Mammary epithelial cell (primary cell): ENCODE measurements at regions of chr6 and their contacts with region 1.

Region 1: DNA sequence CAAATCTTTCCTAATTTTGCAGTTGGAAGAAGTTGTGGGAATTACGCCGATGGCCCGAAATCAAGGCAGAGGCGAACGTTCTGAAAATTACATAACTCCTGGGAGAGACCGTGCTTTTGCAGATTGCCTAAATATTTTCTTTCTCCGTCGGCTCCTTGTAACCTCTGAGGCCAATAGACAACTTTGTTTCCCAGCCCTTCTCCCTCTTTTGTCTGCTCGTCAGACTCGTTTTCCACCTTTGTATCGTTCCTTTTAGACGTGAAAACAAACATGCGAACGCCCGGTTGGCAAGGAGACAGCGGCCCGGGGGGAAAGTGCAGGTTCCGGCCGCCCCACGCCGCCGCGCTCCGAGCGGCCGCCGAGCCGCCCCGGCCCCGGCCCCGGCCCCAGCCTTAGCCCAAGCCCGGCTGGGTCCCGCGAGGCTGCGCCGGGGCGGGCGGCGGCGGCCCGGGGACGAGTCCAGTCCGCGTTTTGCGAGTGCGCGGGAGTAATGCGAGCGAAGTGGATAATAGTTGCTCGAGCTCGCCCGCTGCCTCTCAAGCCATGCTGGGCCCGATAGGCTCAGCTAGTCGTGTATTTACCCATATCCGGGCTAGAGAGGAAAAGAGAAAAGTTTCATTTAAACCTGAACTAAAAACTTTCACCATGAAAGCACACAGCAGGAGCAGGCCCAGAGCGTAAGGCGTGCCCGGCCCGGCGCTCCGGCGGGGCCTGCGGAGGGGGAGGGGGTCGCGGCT is at the start of gene ARID1B:
- DNase-seq: peak; percentile 76
- H3K4me3 ChIP-seq: peak within 1 kb of the TSS; percentile 85 to 92 (median 91)
- H3K27ac ChIP-seq: peak within 1 kb of the TSS; percentile 93
- H3K4me1 ChIP-seq: peaks cover 24% of the 10 kb centered on the region
- H3K27me3 ChIP-seq: no peaks in the 10 kb centered on the region
- CTCF ChIP-seq: no peak
- total RNA-seq, gene ARID1B: 42.5 to 53.7 TPM

Region 2: GRCh38 chr6:155936551-155936950 is 840.5 kb before region 1 on chr6:
- CTCF ChIA-PET with region 1: no interaction called
- dilution Hi-C with region 1: no loop called
- in situ Hi-C with region 1: no loop called
- intact Hi-C with region 1: no loop called
- DNase-seq: no peak
- H3K4me3 ChIP-seq: no peak overlapping the region
- H3K27ac ChIP-seq: no peak overlapping the region
- H3K4me1 ChIP-seq: no peaks in the 10 kb centered on the region
- H3K27me3 ChIP-seq: no peaks in the 10 kb centered on the region
- CTCF ChIP-seq: no peak

Region 3: GRCh38 chr6:156378853-156379252 is 398.2 kb before region 1 on chr6:
- CTCF ChIA-PET with region 1: no interaction called
- dilution Hi-C with region 1: no loop called
- in situ Hi-C with region 1: no loop called
- intact Hi-C with region 1: no loop called
- DNase-seq: no peak
- H3K4me3 ChIP-seq: no peak overlapping the region
- H3K27ac ChIP-seq: no peak overlapping the region
- H3K4me1 ChIP-seq: no peaks in the 10 kb centered on the region
- H3K27me3 ChIP-seq: no peaks in the 10 kb centered on the region
- CTCF ChIP-seq: no peak

Region 4: GRCh38 chr6:156538875-156539660 is 237.9 kb before region 1 on chr6:
- CTCF ChIA-PET with region 1: no interaction called
- dilution Hi-C with region 1: no loop called
- in situ Hi-C with region 1: no loop called
- intact Hi-C with region 1: no loop called
- DNase-seq: no peak
- H3K4me3 ChIP-seq: no peak overlapping the region
- H3K27ac ChIP-seq: no peak overlapping the region
- H3K4me1 ChIP-seq: no peaks in the 10 kb centered on the region
- H3K27me3 ChIP-seq: no peaks in the 10 kb centered on the region
- CTCF ChIP-seq: no peak

Region 5: DNA sequence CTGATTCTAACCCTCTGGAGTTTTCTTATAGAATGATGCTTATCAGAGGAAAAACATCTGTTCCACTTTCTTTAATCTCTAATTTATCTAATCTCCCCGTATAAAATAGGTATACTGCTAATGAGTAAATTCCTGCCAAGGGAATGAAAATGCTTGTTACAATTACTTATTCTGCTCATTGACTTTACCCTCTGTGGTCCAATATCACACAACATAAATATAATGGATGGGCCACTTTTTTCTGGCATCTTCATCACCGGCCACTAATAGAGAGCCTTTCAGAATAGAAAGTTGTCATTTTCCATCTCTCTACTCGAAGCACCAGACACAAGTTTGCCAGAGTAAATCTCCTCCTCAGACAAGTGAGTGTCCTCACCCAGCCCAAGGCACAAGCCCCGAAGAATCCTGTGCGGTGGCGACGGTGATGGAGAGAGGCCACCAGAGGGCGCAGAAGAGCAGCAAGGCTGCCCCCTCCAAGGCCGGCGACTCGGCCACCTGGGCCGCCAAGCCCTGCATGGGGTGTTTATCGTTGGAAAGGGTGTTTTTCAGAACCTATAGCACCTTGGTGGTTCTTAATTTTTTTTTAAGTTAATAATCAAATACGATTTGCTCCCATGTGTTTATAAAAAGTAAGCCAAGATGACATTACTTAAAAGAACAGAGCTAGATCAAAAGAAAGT is 212.7 kb before region 1 on chr6:
- CTCF ChIA-PET with region 1: no interaction called
- dilution Hi-C with region 1: no loop called
- in situ Hi-C with region 1: no loop called
- intact Hi-C with region 1: loop called (anchors 2 kb)
- DNase-seq: peak; percentile 36
- H3K4me3 ChIP-seq: no peak overlapping the region
- H3K27ac ChIP-seq: no peak overlapping the region
- H3K4me1 ChIP-seq: no peaks in the 10 kb centered on the region
- H3K27me3 ChIP-seq: no peaks in the 10 kb centered on the region
- CTCF ChIP-seq: peak; percentile 87 to 96

Region 6: DNA sequence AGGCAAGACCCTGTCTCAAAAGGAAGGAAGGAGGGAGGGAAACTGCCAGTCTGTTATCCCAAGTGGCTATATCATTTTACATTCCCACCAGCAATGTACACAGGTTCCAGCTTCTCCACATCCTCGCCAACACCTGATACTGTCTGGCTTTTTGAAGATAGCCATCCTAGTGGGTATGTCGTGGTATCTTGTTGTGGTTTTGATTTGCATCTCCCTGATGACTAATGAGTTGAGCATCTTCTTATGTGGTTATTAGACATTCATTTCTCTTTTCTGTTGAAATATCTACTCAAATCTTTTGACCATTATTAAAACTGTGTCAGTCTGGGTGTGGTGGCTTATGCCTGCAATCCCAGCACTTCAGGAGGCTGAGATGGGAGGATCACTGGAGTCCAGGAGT is 47.8 kb before region 1 on chr6:
- CTCF ChIA-PET with region 1: interaction called, 4 read pairs
- dilution Hi-C with region 1: loop called (anchors 5 kb)
- in situ Hi-C with region 1: no loop called
- intact Hi-C with region 1: no loop called
- DNase-seq: peak; percentile 85
- H3K4me3 ChIP-seq: no peak overlapping the region
- H3K27ac ChIP-seq: no peak overlapping the region
- H3K4me1 ChIP-seq: no peaks in the 10 kb centered on the region
- H3K27me3 ChIP-seq: peaks cover 1% of the 10 kb centered on the region
- CTCF ChIP-seq: no peak

Region 7: GRCh38 chr6:156933201-156934068 is 156.4 kb after region 1 on chr6:
- CTCF ChIA-PET with region 1: no interaction called
- dilution Hi-C with region 1: no loop called
- in situ Hi-C with region 1: no loop called
- intact Hi-C with region 1: no loop called
- DNase-seq: no peak
- H3K4me3 ChIP-seq: no peak overlapping the region
- H3K27ac ChIP-seq: no peak overlapping the region
- H3K4me1 ChIP-seq: peaks cover 15% of the 10 kb centered on the region
- H3K27me3 ChIP-seq: no peaks in the 10 kb centered on the region
- CTCF ChIP-seq: no peak

Region 8: GRCh38 chr6:156953479-156954146 is 176.6 kb after region 1 on chr6:
- CTCF ChIA-PET with region 1: no interaction called
- dilution Hi-C with region 1: no loop called
- in situ Hi-C with region 1: no loop called
- intact Hi-C with region 1: loop called (anchors 1 kb)
- DNase-seq: peak; percentile 96
- H3K4me3 ChIP-seq: peak overlapping the region in 1 of 3 experiments; percentile 20
- H3K27ac ChIP-seq: peak overlapping the region; percentile 97
- H3K4me1 ChIP-seq: peaks cover 48% of the 10 kb centered on the region
- H3K27me3 ChIP-seq: no peaks in the 10 kb centered on the region
- CTCF ChIP-seq: peak; percentile 5 to 42

Region 9: DNA sequence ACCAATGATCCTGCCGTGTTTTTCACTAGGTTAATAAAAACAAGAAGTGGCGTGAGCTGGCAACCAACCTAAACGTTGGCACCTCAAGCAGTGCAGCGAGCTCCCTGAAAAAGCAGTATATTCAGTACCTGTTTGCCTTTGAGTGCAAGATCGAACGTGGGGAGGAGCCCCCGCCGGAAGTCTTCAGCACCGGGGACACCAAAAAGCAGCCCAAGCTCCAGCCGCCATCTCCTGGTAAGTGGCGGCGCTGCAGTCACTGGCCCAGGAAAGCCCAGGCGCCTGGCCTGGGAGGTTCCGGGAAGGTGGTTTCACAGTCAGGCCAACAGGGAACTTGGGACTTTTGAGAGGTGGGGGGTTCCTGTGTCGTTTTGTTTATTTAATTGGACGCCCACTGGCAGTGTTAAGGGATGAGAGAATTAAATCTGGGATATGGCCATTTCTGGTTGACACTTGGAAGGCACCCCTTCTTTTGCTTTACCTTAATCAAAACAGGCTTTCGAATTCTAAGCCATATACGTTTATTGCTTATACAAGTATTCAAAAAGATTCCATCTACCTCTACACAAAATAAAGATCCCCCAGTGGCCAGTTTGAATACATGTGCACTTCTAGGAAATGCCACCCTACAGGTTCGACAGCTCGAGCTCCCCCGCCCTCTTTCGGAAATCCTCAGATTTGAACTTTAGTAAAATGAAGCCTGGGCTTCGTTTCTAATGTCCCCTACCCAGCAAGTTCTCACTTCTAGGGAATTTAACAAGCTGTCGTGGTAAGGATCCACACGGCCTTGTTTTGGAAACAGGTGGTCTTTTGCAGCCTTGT is 407.4 kb after region 1 on chr6:
- CTCF ChIA-PET with region 1: no interaction called
- dilution Hi-C with region 1: no loop called
- in situ Hi-C with region 1: loop called in 1 of 2 experiments (anchors 25 kb)
- intact Hi-C with region 1: loop called (anchors 2 kb)
- DNase-seq: peak; percentile 57
- H3K4me3 ChIP-seq: no peak overlapping the region
- H3K27ac ChIP-seq: no peak overlapping the region
- H3K4me1 ChIP-seq: peaks cover 10% of the 10 kb centered on the region
- H3K27me3 ChIP-seq: no peaks in the 10 kb centered on the region
- CTCF ChIP-seq: peak; percentile 93 to 98